ENCODE measurements at regions of chr12 and their contacts with region 1.

Region 1: DNA sequence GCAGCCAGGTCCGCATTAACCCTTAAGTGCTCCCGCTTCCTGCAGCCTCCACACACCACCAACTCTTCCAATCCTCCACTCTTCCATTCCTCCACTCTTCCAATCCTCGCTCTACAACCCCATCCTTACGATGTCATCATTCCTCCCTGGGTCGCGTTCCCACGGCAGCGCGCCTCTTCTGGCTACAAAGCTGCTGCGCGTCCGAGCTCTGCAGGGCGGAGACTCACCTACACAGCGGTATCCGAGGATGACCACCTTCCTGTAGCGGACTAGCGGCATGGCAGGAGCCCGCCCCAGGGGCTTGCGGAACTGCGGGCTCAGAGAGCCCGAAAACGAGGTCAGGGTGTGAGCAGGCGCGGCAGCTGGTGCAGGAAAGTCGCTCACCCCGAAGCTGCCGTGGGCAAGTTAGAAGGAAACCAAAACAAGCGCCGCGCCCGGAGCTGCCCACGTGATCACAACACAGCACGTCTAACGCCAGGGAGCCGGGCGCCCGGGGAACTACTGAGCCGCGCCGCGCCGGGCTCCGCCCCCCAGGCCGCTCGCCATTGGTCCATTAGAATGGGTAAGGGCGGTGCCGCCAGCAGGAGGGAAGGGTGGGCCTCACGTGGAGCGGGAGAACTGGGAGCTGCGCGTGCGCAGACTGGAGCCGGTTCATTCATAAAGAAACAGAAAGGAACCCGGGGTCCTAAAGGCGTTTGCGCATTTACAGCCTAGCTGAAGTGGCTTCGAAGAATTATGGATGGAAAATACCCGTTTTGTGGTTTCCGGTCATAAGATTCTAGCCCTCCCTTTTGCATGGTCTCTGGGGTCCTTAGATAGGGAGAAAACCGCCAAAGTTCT is at the start of gene RHEBL1:
- DNase-seq: peak; percentile 100
- ATAC-seq: peak; percentile 99
- H3K4me3 Mint-ChIP-seq: peak within 1 kb of the TSS; percentile 87
- H3K27ac Mint-ChIP-seq: peak within 1 kb of the TSS; percentile 92
- H3K4me1 Mint-ChIP-seq: peaks cover 29% of the 10 kb centered on the region
- H3K27me3 Mint-ChIP-seq: no peaks in the 10 kb centered on the region
- total RNA-seq, gene RHEBL1: 14.9 to 15.1 TPM

Region 2: GRCh38 chr12:49008943-49009342 is 60.8 kb before region 1 on chr12:
- CTCF ChIA-PET with region 1: no interaction called
- DNase-seq: no peak
- ATAC-seq: no peak
- H3K4me3 Mint-ChIP-seq: no peak overlapping the region
- H3K27ac Mint-ChIP-seq: no peak overlapping the region
- H3K4me1 Mint-ChIP-seq: peaks cover 2% of the 10 kb centered on the region
- H3K27me3 Mint-ChIP-seq: no peaks in the 10 kb centered on the region

Region 3: DNA sequence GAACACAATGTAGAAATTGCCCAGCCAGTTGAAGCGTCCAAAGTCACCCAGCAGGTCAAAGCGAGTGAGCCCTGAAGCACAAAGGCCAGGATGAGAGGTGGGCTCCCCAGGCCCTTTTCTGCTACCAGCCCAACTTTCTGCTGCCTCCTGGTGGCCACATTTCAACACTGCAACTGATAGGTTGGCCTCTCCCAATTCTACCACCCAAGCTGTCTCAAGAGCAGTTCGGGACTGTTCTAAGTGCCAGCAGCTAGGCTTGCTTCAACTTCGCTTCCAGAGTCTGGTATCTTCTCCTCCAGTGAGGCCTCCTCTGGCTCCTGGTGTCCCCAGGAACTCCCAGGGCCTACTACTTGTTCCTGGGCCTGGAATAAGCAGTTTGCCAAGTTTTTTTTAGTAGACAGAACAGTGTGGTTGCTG is 28.3 kb after region 1 on chr12:
- CTCF ChIA-PET with region 1: interaction called, 222 read pairs
- DNase-seq: peak; percentile 77
- ATAC-seq: peak; percentile 56
- H3K4me3 Mint-ChIP-seq: no peak overlapping the region
- H3K27ac Mint-ChIP-seq: no peak overlapping the region
- H3K4me1 Mint-ChIP-seq: peaks cover 11% of the 10 kb centered on the region
- H3K27me3 Mint-ChIP-seq: peaks cover 28% of the 10 kb centered on the region